Activated CD4-positive, alpha-beta T cell treated with anti-CD3 and anti-CD28 coated beads for 36 hours (primary cell): ENCODE measurements at regions of chr12 and their contacts with region 1.

Region 1: DNA sequence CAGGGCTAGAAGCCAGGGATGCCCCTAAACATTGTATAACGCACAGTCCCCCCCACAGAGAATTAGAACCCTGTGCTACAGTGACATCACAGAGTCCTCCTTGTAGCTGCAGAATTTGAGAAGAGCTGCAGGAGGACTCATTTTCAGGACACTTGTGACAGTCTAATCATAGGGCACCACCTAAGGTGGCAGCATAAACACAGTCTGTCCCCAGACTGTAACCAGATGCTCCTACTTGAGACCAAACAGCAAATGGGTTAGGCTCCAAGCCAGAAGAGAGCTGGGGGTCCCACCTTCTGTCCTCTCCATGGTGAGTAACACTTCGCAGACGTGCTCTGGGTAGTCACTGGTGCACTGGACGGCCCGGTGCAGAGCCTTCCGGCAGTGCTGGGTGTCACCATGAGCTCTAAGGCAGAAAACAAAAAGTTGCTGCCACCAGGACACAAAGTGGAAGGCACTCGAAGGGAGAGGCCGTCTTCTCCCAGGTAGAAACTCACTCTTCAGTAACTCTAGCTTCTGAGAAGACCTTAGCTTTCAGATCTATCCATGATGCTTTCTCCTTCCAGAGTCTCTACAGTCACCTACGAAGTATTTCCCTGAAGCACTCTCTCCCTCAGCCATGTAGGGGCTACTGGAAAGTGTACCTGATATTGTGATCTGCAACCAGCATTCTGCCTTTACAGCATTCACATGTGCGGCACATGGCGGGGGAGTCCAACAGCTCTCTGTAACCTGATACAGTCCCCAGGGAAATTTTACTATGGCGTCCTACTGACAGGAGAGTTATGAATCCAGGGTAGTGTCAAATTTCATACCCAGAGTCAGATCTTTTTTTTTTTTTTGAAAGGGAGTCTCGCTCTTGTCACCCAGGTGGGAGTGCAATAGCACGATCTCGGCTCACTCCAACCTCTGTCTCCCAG is 17.1 kb downstream of the FICD start:
- DNase-seq: no peak
- ATAC-seq: no peak
- H3K4me3 Mint-ChIP-seq: no peak overlapping the region
- H3K27ac Mint-ChIP-seq: no peak overlapping the region
- H3K4me1 Mint-ChIP-seq: no peaks in the 10 kb centered on the region
- H3K27me3 Mint-ChIP-seq: no peaks in the 10 kb centered on the region

Region 2: DNA sequence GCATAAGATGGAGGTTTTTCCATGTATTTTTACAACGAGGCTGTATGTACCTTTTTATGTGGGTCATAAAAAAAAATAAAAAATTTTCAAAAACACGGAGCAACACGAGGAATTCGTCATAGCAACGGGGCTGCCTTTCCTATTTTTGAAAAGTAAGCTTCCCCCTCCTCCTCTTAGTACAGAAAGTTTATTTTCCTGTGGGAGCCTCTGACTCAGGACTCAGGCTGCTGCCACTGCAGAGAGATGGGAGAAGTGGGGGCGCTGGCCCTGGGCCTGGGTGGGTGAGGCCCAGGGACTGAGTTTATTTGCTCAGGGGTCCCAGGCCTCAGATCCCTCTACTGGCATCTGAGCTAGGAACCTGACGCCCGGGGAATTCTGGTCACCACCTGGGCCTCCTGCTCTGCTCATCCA is 182.9 kb before region 1 on chr12:
- CTCF ChIA-PET with region 1: no interaction called
- POLR2A ChIA-PET with region 1: no interaction called
- intact Hi-C with region 1: no loop called
- DNase-seq: no peak
- ATAC-seq: no peak
- H3K4me3 Mint-ChIP-seq: no peak overlapping the region
- H3K27ac Mint-ChIP-seq: no peak overlapping the region
- H3K4me1 Mint-ChIP-seq: peaks cover 2% of the 10 kb centered on the region
- H3K27me3 Mint-ChIP-seq: peaks cover 4% of the 10 kb centered on the region

Region 3: GRCh38 chr12:108542320-108542719 is 10.1 kb after region 1 on chr12:
- CTCF ChIA-PET with region 1: no interaction called
- POLR2A ChIA-PET with region 1: no interaction called
- intact Hi-C with region 1: loop called in 1 of 2 experiments (anchors 1 kb)
- DNase-seq: no peak
- ATAC-seq: no peak
- H3K4me3 Mint-ChIP-seq: no peak overlapping the region
- H3K27ac Mint-ChIP-seq: peak overlapping the region; percentile 42
- H3K4me1 Mint-ChIP-seq: peaks cover 12% of the 10 kb centered on the region
- H3K27me3 Mint-ChIP-seq: no peaks in the 10 kb centered on the region